ENCODE measurements at regions of chr10 and their contacts with region 1.

Region 1: GRCh38 chr10:104308439-104308903 is 29.8 kb downstream of the ITPRIP start:
- DNase-seq: no peak
- ATAC-seq: no peak
- H3K4me3 ChIP-seq: no peak overlapping the region
- H3K4me3 Mint-ChIP-seq: no peak overlapping the region
- H3K27ac ChIP-seq: peak overlapping the region in 1 of 2 donors; percentile 49
- H3K27ac Mint-ChIP-seq: peak overlapping the region; percentile 76
- H3K4me1 ChIP-seq: peaks cover 13 to 21% of the 10 kb centered on the region in 2 donors
- H3K4me1 Mint-ChIP-seq: peaks cover 23% of the 10 kb centered on the region
- H3K27me3 ChIP-seq: no peaks in the 10 kb centered on the region
- H3K27me3 Mint-ChIP-seq: no peaks in the 10 kb centered on the region
- CTCF ChIP-seq: no peak

Region 2: DNA sequence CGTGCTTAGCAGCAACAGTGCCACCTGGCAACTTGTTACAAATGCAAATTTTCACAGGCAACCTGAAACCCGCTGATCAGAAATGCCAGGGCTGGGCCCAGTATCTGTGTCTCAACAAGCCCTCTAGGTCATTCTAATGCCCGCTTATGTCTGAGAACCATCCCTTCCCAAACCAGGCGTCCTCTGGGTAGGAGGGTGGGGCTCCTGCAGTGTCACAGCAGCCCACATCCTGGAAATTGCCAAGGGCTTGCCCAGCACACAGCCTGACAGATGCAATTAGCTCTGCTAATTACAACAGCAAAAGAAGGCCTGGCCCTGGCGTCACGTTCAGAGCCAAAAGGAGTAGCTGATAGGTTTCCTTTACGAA is 13.9 kb after region 1 on chr10:
- CTCF ChIA-PET with region 1: interaction called, 108 read pairs
- POLR2A ChIA-PET with region 1: no interaction called
- intact Hi-C with region 1: no loop called
- DNase-seq: peak; percentile 41
- ATAC-seq: peak; percentile 48
- H3K4me3 ChIP-seq: peak overlapping the region in 1 of 5 experiments; percentile 30
- H3K4me3 Mint-ChIP-seq: peak overlapping the region; percentile 58
- H3K27ac ChIP-seq: peak overlapping the region; percentile 46 to 67
- H3K27ac Mint-ChIP-seq: peak overlapping the region; percentile 80
- H3K4me1 ChIP-seq: peaks cover 94 to 98% of the 10 kb centered on the region in 2 donors
- H3K4me1 Mint-ChIP-seq: peaks cover 93% of the 10 kb centered on the region
- H3K27me3 ChIP-seq: no peaks in the 10 kb centered on the region
- H3K27me3 Mint-ChIP-seq: no peaks in the 10 kb centered on the region
- CTCF ChIP-seq: no peak

Region 3: GRCh38 chr10:104328896-104329710 is 20.6 kb after region 1 on chr10:
- CTCF ChIA-PET with region 1: interaction called, 108 read pairs
- POLR2A ChIA-PET with region 1: no interaction called
- intact Hi-C with region 1: no loop called
- DNase-seq: peak; percentile 86
- ATAC-seq: peak; percentile 82
- H3K4me3 ChIP-seq: peak overlapping the region in 4 of 5 experiments; percentile 5 to 24 (median 20)
- H3K4me3 Mint-ChIP-seq: peak overlapping the region; percentile 82
- H3K27ac ChIP-seq: peak overlapping the region; percentile 50 to 58
- H3K27ac Mint-ChIP-seq: peak overlapping the region; percentile 89
- H3K4me1 ChIP-seq: peaks cover 78 to 92% of the 10 kb centered on the region in 2 donors
- H3K4me1 Mint-ChIP-seq: peaks cover 98% of the 10 kb centered on the region
- H3K27me3 ChIP-seq: no peaks in the 10 kb centered on the region
- H3K27me3 Mint-ChIP-seq: no peaks in the 10 kb centered on the region
- CTCF ChIP-seq: no peak